Left lung (tissue), 14 donors: ENCODE measurements at regions of chr21 and their contacts with region 1.

Region 1: GRCh38 chr21:42258153-42258884 is 39.4 kb downstream of the ABCG1 start:
- DNase-seq: peak in 3 of 4 donors; percentile 55 to 93 (median 70)
- ATAC-seq: peak; percentile 82
- H3K4me3 ChIP-seq: no peak overlapping the region
- H3K27ac ChIP-seq: no peak overlapping the region
- H3K4me1 ChIP-seq: peaks cover 0 to 47% of the 10 kb centered on the region in 2 donors
- H3K27me3 ChIP-seq: no peaks in the 10 kb centered on the region
- CTCF ChIP-seq: peak; percentile 80 to 93

Region 2: DNA sequence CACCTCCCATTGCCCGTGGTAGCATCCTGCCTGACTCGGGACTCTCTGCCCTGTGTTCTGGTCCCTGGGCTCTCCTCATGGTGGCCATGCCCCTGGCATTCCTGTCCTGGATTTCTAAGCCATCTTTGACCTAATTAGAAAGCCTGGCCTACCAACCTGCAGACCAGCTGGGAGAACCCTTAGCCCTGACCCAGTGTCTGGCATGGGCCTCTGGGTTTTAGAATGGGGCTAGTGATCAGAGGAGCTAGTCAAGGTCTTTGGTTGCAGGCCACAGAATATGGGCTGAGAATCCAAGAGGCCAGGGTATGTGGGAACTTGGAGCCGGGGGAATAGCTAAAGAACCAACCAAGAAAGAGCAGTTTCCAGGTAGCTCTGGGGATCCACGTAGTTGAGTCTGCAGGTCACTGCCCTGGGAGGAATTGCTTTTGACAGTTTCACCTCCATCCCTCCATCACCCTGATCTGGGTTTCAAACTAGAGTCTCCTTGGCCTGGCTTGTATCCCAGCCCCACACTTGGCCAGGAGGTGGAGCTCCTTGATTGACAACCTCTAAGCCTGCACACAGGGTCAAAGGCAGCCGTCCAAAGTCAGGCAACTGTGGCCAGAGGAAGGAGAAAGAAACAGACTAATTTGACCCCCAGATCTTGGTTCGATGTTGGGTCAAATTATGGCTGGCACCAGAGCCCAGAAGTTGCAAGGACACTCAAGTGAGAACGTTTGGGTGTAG is 94.1 kb before region 1 on chr21:
- intact Hi-C with region 1: loop called in 1 of 2 experiments (anchors 10 kb)
- DNase-seq: peak in 1 of 4 donors; percentile 69
- ATAC-seq: peak; percentile 91
- H3K4me3 ChIP-seq: no peak overlapping the region
- H3K27ac ChIP-seq: no peak overlapping the region
- H3K4me1 ChIP-seq: peaks cover 0 to 3% of the 10 kb centered on the region in 2 donors
- H3K27me3 ChIP-seq: peaks cover 0 to 12% of the 10 kb centered on the region in 2 donors
- CTCF ChIP-seq: peak; percentile 23 to 71